ENCODE measurements at regions of chr20 and their contacts with region 1.

Region 1: DNA sequence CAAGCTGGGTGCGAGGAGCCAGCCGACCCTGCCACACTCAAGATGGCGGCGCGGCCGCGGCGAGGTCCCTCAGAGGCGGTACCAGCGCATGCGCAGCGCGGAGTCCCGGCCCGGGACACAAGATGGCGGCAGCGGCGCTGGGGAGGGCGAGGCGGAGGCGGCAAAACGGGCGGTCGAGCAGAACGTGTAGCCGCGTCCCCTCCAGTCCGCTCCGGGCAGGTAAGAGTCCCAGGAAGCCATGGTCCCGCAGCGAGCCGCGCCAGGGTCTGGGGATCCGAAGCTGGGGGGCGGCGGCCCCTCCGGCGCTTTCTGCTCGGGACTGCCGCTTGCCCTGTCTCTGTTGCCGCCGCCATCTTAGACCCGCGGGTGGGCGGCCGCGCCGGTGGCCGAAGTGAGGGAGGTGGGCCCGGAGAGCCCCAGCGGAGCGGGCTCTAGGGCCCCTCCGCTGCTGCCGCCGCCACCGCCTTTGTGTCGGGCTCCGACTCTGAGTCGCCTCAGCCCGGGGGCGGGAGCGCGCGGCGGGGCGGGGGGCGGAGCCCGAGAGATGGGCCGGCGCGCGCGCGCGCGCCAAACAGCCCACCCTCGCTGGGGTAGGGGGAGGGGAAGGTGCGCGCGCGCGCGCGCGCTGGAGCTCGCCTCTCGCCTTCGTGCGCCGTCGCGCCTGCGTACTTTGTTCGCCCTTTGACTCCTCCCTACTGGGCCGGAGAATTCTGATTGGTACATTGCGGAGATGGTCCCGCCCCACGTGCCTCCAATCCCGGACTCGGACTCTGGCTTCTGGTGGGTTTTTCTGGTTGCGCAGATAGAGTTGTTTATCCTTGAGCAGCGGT is at the start of gene PCIF1:
- DNase-seq: peak; percentile 98
- H3K4me3 Mint-ChIP-seq: peak within 1 kb of the TSS; percentile 87
- H3K27ac Mint-ChIP-seq: peak within 1 kb of the TSS; percentile 96
- H3K4me1 Mint-ChIP-seq: peaks cover 29% of the 10 kb centered on the region
- H3K27me3 Mint-ChIP-seq: no peaks in the 10 kb centered on the region
- total RNA-seq, gene PCIF1: 44.2 to 45.7 TPM

Region 2: GRCh38 chr20:45812157-45813020 is 122.4 kb before region 1 on chr20 and contains the start of gene UBE2C:
- CTCF ChIA-PET with region 1: no interaction called
- POLR2A ChIA-PET with region 1: interaction called, 25 read pairs
- DNase-seq: peak; percentile 97
- H3K4me3 Mint-ChIP-seq: peak within 1 kb of the TSS; percentile 99
- H3K27ac Mint-ChIP-seq: peak within 1 kb of the TSS; percentile 83
- H3K4me1 Mint-ChIP-seq: peaks cover 36% of the 10 kb centered on the region
- H3K27me3 Mint-ChIP-seq: no peaks in the 10 kb centered on the region
- total RNA-seq, gene UBE2C: 170 to 184 TPM

Region 3: GRCh38 chr20:45833030-45833882 is 101.5 kb before region 1 on chr20 and contains the start of gene SNX21:
- CTCF ChIA-PET with region 1: interaction called, 3 read pairs
- POLR2A ChIA-PET with region 1: interaction called, 21 read pairs
- DNase-seq: peak; percentile 32
- H3K4me3 Mint-ChIP-seq: peak within 1 kb of the TSS; percentile 57
- H3K27ac Mint-ChIP-seq: no peak within 1 kb of the TSS
- H3K4me1 Mint-ChIP-seq: peaks cover 19% of the 10 kb centered on the region
- H3K27me3 Mint-ChIP-seq: peaks cover 13% of the 10 kb centered on the region
- total RNA-seq, gene SNX21: 0.91 to 1.6 TPM

Region 4: GRCh38 chr20:45848969-45849582 is 85.7 kb before region 1 on chr20:
- CTCF ChIA-PET with region 1: no interaction called
- POLR2A ChIA-PET with region 1: no interaction called
- DNase-seq: no peak
- H3K4me3 Mint-ChIP-seq: no peak overlapping the region
- H3K27ac Mint-ChIP-seq: no peak overlapping the region
- H3K4me1 Mint-ChIP-seq: peaks cover 8% of the 10 kb centered on the region
- H3K27me3 Mint-ChIP-seq: no peaks in the 10 kb centered on the region

Region 5: DNA sequence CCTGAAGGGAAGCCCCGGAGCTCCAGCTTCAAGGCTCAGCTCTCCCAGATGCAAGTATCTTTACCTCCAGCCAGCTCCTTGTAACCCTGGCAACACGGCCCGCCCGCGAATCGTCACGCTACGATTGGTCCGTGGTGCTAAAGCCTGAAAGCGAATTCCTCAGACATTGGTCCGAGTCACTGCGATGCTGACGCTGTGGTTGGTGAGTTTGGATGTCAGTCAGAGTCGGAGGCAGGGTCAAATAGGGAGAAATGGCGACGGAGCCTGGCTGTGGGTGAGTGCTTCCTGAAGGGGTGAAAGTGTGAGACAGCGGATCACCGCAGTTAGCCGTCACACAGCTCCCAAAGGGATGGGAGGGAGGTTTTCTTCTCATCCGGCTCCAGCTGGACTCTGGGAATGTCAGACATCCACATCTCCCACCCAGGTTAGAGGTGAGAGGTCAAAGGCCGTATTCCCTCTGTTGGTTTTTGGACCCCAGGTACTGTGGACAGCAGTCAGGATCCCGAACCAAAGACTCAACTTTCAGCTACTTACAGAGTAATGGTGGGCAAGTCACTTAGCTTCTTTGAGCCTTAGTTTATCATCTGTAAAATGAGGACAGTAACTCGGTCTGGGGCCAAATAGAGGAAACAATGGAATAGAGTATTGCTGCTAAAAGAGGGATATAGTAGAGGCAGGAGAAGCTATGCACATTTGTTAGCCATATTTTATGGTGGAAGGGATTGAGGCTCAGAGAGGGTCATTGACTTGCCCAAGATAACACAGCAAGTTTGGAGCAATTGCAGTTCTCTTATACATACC is 53.6 kb before region 1 on chr20 and contains the start of gene ZSWIM1:
- CTCF ChIA-PET with region 1: interaction called, 3 read pairs
- POLR2A ChIA-PET with region 1: interaction called, 32 read pairs
- DNase-seq: peak; percentile 98
- H3K4me3 Mint-ChIP-seq: peak within 1 kb of the TSS; percentile 72
- H3K27ac Mint-ChIP-seq: peak within 1 kb of the TSS; percentile 34
- H3K4me1 Mint-ChIP-seq: peaks cover 40% of the 10 kb centered on the region
- H3K27me3 Mint-ChIP-seq: peaks cover 13% of the 10 kb centered on the region
- total RNA-seq, gene ZSWIM1: 2.7 to 2.9 TPM

Region 6: GRCh38 chr20:45910670-45911485 is 23.9 kb before region 1 on chr20:
- CTCF ChIA-PET with region 1: interaction called, 4 read pairs
- POLR2A ChIA-PET with region 1: interaction called, 16 read pairs
- DNase-seq: peak; percentile 92
- H3K4me3 Mint-ChIP-seq: peak overlapping the region; percentile 64
- H3K27ac Mint-ChIP-seq: peak overlapping the region; percentile 43
- H3K4me1 Mint-ChIP-seq: peaks cover 19% of the 10 kb centered on the region
- H3K27me3 Mint-ChIP-seq: peaks cover 17% of the 10 kb centered on the region

Region 7: DNA sequence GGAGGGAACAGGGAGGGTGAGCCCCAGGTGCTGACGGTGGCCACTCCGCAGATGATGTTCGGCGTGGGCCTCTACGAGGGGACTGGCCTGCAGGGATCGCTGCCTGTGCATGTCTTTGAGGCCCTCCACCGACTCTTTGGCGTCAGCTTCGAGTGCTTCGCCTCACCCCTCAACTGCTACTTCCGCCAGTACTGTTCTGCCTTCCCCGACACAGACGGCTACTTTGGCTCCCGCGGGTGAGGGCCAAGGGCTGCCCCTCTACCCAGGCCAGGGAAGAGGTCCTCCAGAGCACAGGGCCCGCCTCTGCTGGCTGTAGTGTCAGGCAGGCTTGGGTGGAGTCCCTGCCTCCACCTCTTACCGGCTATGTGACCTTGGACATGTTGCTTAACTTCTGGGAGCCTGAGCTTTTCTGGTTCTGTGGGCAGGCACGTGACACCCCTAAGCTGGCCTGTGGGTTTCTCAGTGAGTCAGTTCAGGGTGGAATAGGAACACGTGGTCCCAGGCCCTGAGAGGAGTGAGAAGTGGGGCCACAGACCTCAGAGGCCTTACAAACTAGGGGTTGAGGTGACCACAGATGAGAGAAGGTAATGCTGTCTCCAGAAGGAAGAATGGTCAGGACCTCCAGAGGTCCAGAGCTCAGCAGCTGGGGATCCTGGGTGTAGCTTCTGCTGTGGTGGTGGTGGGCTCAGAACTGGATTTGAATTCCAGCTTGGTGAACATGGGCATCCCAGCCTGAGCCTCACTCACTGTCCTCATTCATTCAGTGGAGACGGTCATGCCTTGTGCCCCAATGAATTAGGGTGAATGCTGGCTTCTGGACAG is 11.6 kb after region 1 on chr20:
- CTCF ChIA-PET with region 1: interaction called, 5 read pairs
- POLR2A ChIA-PET with region 1: interaction called, 56 read pairs
- DNase-seq: peak; percentile 75
- H3K4me3 Mint-ChIP-seq: no peak overlapping the region
- H3K27ac Mint-ChIP-seq: peak overlapping the region; percentile 80
- H3K4me1 Mint-ChIP-seq: peaks cover 38% of the 10 kb centered on the region
- H3K27me3 Mint-ChIP-seq: no peaks in the 10 kb centered on the region

Measured in activated CD4-positive, alpha-beta memory T cell treated with anti-CD3 and anti-CD28 coated beads, Interleukin-2, amount 10 ng/mL, durations not matched to agents 7 days and 5 days (primary cell).